Lower lobe of right lung (tissue), 2 donors: ENCODE measurements at regions of chr1 and their contacts with region 1.

Region 1: GRCh38 chr1:226121587-226122400 is 59.3 kb downstream of the H3-3A start:
- DNase-seq: peak; percentile 77
- ATAC-seq: peak; percentile 88 to 91
- H3K4me3 ChIP-seq: peak overlapping the region; percentile 74
- H3K27ac ChIP-seq: peak overlapping the region; percentile 86
- H3K4me1 ChIP-seq: peaks cover 11% of the 10 kb centered on the region
- H3K27me3 ChIP-seq: no peaks in the 10 kb centered on the region
- CTCF ChIP-seq: peak; percentile 69

Region 2: GRCh38 chr1:226195144-226195543 is 73.3 kb after region 1 on chr1:
- intact Hi-C with region 1: loop called (anchors 10 kb)
- DNase-seq: no peak
- ATAC-seq: no peak
- H3K4me3 ChIP-seq: no peak overlapping the region
- H3K27ac ChIP-seq: no peak overlapping the region
- H3K4me1 ChIP-seq: no peaks in the 10 kb centered on the region
- H3K27me3 ChIP-seq: no peaks in the 10 kb centered on the region
- CTCF ChIP-seq: no peak

Region 3: GRCh38 chr1:226233293-226233692 is 111.5 kb after region 1 on chr1:
- intact Hi-C with region 1: no loop called
- DNase-seq: no peak
- ATAC-seq: no peak
- H3K4me3 ChIP-seq: no peak overlapping the region
- H3K27ac ChIP-seq: no peak overlapping the region
- H3K4me1 ChIP-seq: no peaks in the 10 kb centered on the region
- H3K27me3 ChIP-seq: no peaks in the 10 kb centered on the region
- CTCF ChIP-seq: no peak